Psoas muscle (tissue), 8 donors: ENCODE measurements at regions of chr3 and their contacts with region 1.

Region 1: GRCh38 chr3:150763122-150763841 is at the start of gene SIAH2:
- DNase-seq: peak; percentile 94 to 95
- ATAC-seq: peak; percentile 90 to 95 (median 93)
- H3K4me3 ChIP-seq: peak within 1 kb of the TSS; percentile 90
- H3K27ac ChIP-seq: peak within 1 kb of the TSS; percentile 95
- H3K4me1 ChIP-seq: peaks cover 30% of the 10 kb centered on the region
- H3K27me3 ChIP-seq: no peaks in the 10 kb centered on the region
- CTCF ChIP-seq: no peak
- total RNA-seq, gene SIAH2: 10.2 to 13.6 (median 11.7) TPM

Region 2: DNA sequence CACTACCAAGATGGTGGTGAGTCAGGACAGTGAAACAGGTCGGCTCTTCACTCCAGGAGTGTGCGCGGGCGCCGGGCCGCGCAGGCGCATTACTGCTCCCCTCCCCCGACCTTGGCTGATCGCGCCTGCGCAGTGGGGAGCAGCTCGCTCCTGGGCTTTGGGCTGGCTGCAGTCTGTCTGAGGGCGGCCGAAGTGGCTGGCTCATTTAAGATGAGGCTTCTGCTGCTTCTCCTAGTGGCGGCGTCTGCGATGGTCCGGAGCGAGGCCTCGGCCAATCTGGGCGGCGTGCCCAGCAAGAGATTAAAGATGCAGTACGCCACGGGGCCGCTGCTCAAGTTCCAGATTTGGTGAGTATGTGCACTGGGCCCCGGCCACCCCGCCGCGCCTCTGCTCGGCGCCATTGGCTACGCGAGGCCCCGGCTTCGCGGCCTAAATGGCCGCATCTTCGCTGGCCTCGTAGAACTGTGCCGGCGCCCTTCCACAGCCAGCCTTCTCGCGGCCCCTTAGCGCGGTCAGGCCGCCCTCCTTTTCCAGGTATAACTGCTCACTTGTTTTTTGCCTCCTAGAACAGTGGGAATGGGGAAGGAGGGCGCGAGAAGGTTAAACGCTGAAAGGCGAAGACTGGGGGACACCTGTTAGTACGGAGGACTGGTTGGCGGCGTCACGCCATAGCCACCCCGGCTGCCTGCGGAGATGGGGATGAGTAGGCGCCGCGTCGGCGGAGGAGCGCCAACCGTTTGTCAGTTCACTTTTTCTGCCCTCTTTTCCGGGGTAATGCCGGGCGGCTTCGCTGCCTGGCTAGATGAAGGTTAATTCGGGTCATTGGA is 159.9 kb before region 1 on chr3 and contains the start of gene SELENOT:
- intact Hi-C with region 1: loop called in 1 of 2 experiments (anchors 10 kb)
- DNase-seq: peak; percentile 93 to 98
- ATAC-seq: peak; percentile 92 to 96 (median 94)
- H3K4me3 ChIP-seq: peak within 1 kb of the TSS; percentile 85
- H3K27ac ChIP-seq: peak within 1 kb of the TSS; percentile 94
- H3K4me1 ChIP-seq: peaks cover 40% of the 10 kb centered on the region
- H3K27me3 ChIP-seq: no peaks in the 10 kb centered on the region
- CTCF ChIP-seq: peak; percentile 36
- total RNA-seq, gene SELENOT: 49.5 to 78.1 (median 54.8) TPM

Region 3: GRCh38 chr3:150703299-150704134 is 59.8 kb before region 1 on chr3 and contains the start of gene ERICH6:
- intact Hi-C with region 1: loop called in 1 of 2 experiments (anchors 5 kb)
- DNase-seq: peak; percentile 93 to 95
- ATAC-seq: peak; percentile 95 to 100 (median 98)
- H3K4me3 ChIP-seq: peak within 1 kb of the TSS; percentile 75
- H3K27ac ChIP-seq: peak within 1 kb of the TSS; percentile 64
- H3K4me1 ChIP-seq: no peaks in the 10 kb centered on the region
- H3K27me3 ChIP-seq: no peaks in the 10 kb centered on the region
- CTCF ChIP-seq: no peak
- total RNA-seq, gene ERICH6: not detected